ENCODE measurements at regions of chr2 and their contacts with region 1.

Region 1: DNA sequence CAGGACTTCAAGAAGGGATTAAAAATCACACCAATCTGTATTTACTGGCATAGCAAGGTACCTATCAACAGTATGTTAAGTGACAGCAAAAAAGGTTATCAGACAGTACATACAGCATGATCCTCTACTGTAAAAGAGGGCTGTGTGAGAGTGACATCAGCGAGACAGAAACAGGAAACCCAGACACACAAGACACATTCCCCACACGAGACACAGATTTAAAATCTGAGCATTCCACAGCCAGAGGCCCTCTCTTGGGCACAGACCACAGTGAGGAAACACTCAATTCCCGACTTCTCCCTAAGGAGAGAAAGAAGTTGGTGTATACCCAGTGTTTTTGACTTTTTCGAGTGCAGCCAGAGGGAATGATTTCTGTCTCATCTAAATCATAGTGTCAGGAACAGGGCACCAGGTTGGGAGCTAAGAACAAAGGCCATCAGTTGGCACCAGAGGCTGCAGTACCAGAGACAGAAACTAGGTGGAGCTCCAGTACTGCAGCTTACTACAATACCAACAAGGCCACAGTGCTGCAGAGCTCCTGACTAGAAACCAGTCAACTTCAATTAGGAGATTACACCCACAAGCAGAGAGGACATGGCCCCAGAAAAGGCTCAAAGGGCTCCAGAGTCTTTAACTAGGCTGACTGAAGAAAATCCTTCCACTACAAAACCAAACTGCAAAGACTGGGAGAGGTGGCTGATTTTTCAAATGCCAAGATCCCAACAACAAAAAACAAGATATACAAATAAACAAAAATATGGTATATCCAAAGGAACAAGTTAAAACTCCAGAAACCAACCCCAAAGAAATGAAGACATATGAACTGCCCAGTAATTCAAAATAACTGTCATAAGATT is 41.0 kb downstream of the UNC50 start:
- DNase-seq: peak; percentile 87
- H3K4me3 Mint-ChIP-seq: no peak overlapping the region
- H3K27ac Mint-ChIP-seq: peak overlapping the region; percentile 74
- H3K4me1 Mint-ChIP-seq: peaks cover 52% of the 10 kb centered on the region
- H3K27me3 Mint-ChIP-seq: no peaks in the 10 kb centered on the region

Region 2: DNA sequence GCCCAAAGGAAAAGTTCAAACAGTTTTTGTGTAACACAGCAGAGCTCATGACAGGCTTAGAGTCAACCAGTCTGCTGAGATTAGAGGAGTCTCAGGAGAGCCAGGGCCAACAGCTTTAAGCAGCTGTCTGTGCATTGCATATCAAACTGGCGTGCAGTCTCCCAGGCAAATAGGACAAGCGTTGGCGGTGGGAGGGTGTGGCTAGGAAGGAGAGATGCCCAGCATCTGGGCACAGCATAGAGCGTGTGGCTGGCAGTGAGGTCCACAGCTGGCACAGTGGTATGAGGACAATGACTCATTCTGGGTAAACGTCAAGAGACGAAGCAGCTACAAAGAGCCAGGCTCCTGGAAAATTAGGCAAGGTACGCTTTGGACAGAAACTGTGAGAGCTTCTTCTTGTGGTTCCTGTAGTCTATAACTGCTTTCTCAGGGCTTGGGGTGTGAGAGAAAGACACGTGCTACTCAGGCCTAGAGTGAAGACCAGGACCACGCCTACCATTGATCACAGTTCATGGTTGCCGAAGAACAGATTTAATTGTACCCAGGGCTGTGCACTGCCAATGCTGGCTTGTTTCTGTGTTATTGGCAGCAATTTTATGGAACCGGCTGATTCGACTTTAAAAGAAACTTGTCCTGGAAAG is 921.2 kb before region 1 on chr2:
- CTCF ChIA-PET with region 1: no interaction called
- POLR2A ChIA-PET with region 1: no interaction called
- intact Hi-C with region 1: no loop called
- DNase-seq: peak; percentile 47
- H3K4me3 Mint-ChIP-seq: no peak overlapping the region
- H3K27ac Mint-ChIP-seq: peak overlapping the region; percentile 40
- H3K4me1 Mint-ChIP-seq: peaks cover 51% of the 10 kb centered on the region
- H3K27me3 Mint-ChIP-seq: no peaks in the 10 kb centered on the region

Region 3: DNA sequence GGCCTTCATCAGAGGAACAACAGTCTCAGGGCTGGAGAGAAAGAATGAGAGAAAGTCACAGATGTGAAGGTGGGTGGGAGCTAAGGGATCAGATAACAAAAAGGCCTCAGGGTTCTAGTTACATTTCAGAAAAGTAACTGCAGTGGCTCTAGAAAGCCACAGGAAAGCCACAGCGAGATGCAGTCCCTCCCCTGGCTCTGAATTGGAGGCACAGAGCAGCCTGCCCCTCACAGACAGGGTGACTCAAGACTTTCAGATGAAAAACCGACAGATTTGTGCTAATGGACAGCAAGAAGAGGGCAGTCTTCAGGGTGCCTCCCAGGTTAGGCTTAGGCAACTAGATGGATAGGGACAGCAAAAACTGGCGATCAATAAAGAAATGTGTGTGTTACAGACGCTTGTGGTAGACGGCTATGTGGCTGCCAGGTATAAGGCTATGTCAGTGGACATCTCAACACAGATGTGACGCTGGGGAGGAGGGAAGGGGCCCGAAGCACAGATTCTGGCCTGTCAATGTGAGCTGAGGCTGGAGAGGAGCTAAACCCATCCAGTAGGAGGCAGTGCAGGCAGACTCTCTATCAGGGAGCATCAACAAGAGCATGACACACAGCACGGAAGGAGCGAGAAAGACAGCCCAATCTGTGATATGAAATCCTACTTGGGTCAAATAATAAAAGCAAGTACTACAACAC is 14.8 kb before region 1 on chr2:
- CTCF ChIA-PET with region 1: interaction called, 22 read pairs
- POLR2A ChIA-PET with region 1: interaction called, 3 read pairs
- intact Hi-C with region 1: no loop called
- DNase-seq: peak; percentile 70
- H3K4me3 Mint-ChIP-seq: no peak overlapping the region
- H3K27ac Mint-ChIP-seq: peak overlapping the region; percentile 72
- H3K4me1 Mint-ChIP-seq: peaks cover 35% of the 10 kb centered on the region
- H3K27me3 Mint-ChIP-seq: no peaks in the 10 kb centered on the region

Region 4: DNA sequence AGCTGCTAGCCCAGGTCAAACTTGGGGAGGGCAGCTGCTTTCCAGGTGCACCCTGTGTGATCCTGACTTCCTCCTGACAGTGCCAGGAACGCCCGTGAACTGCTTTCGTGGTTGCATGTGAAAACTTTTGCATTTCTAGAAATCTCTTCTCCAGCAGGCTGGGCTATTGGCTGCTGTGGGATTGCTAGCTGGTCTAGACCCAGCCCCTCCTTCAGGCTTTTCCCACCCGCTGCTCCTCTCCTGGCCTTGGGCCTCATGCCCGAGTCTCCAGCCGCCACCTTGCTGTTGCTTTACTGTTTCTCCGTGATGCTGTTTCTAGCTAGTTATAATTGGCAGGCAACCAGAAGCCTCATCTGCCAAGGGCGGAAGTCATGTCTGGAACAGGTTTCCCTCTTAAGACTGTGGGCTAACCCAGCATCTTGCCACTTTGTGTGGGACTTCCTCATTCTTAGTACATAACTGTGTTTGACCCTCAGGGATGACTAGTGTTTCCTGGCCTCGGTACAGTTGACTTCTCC is 108.6 kb after region 1 on chr2:
- CTCF ChIA-PET with region 1: interaction called, 11 read pairs
- POLR2A ChIA-PET with region 1: no interaction called
- intact Hi-C with region 1: no loop called
- DNase-seq: peak; percentile 69
- H3K4me3 Mint-ChIP-seq: peak overlapping the region; percentile 51
- H3K27ac Mint-ChIP-seq: peak overlapping the region; percentile 86
- H3K4me1 Mint-ChIP-seq: peaks cover 51% of the 10 kb centered on the region
- H3K27me3 Mint-ChIP-seq: no peaks in the 10 kb centered on the region

Region 5: GRCh38 chr2:98822301-98823164 is 173.2 kb after region 1 on chr2:
- CTCF ChIA-PET with region 1: interaction called, 15 read pairs
- POLR2A ChIA-PET with region 1: no interaction called
- intact Hi-C with region 1: no loop called
- DNase-seq: peak; percentile 71
- H3K4me3 Mint-ChIP-seq: peak overlapping the region; percentile 48
- H3K27ac Mint-ChIP-seq: no peak overlapping the region
- H3K4me1 Mint-ChIP-seq: peaks cover 11% of the 10 kb centered on the region
- H3K27me3 Mint-ChIP-seq: peaks cover 2% of the 10 kb centered on the region

Region 6: GRCh38 chr2:98835831-98836385 is 186.5 kb after region 1 on chr2:
- CTCF ChIA-PET with region 1: interaction called, 92 read pairs
- POLR2A ChIA-PET with region 1: interaction called, 3 read pairs
- intact Hi-C with region 1: loop called (anchors 1 kb)
- DNase-seq: peak; percentile 56
- H3K4me3 Mint-ChIP-seq: peak overlapping the region; percentile 6
- H3K27ac Mint-ChIP-seq: peak overlapping the region; percentile 21
- H3K4me1 Mint-ChIP-seq: peaks cover 35% of the 10 kb centered on the region
- H3K27me3 Mint-ChIP-seq: no peaks in the 10 kb centered on the region

Region 7: GRCh38 chr2:99066075-99066958 is 417.0 kb after region 1 on chr2:
- CTCF ChIA-PET with region 1: interaction called, 11 read pairs
- POLR2A ChIA-PET with region 1: no interaction called
- intact Hi-C with region 1: loop called (anchors 1 kb)
- DNase-seq: peak; percentile 46
- H3K4me3 Mint-ChIP-seq: no peak overlapping the region
- H3K27ac Mint-ChIP-seq: no peak overlapping the region
- H3K4me1 Mint-ChIP-seq: no peaks in the 10 kb centered on the region
- H3K27me3 Mint-ChIP-seq: no peaks in the 10 kb centered on the region